ENCODE measurements at regions of chr2 and their contacts with region 1.

Region 1: GRCh38 chr2:232697100-232697865 is at the start of gene GIGYF2:
- DNase-seq: peak; percentile 73 to 94 (median 84)
- ATAC-seq: peak; percentile 95
- H3K4me3 ChIP-seq: peak within 1 kb of the TSS; percentile 94
- H3K4me3 Mint-ChIP-seq: peak within 1 kb of the TSS; percentile 88 to 98 (median 93)
- H3K27ac ChIP-seq: peak within 1 kb of the TSS; percentile 96
- H3K27ac Mint-ChIP-seq: peak within 1 kb of the TSS; percentile 82 to 96 (median 87)
- H3K4me1 ChIP-seq: peaks cover 35 to 37% of the 10 kb centered on the region in 2 donors
- H3K4me1 Mint-ChIP-seq: peaks cover 22 to 40% (median 35%) of the 10 kb centered on the region in 7 donors
- H3K27me3 ChIP-seq: no peaks in the 10 kb centered on the region
- H3K27me3 Mint-ChIP-seq: peaks cover 0 to 10% (median 0%) of the 10 kb centered on the region in 5 donors
- total RNA-seq, gene GIGYF2: 70.7 to 82.8 (median 79.8) TPM

Region 2: DNA sequence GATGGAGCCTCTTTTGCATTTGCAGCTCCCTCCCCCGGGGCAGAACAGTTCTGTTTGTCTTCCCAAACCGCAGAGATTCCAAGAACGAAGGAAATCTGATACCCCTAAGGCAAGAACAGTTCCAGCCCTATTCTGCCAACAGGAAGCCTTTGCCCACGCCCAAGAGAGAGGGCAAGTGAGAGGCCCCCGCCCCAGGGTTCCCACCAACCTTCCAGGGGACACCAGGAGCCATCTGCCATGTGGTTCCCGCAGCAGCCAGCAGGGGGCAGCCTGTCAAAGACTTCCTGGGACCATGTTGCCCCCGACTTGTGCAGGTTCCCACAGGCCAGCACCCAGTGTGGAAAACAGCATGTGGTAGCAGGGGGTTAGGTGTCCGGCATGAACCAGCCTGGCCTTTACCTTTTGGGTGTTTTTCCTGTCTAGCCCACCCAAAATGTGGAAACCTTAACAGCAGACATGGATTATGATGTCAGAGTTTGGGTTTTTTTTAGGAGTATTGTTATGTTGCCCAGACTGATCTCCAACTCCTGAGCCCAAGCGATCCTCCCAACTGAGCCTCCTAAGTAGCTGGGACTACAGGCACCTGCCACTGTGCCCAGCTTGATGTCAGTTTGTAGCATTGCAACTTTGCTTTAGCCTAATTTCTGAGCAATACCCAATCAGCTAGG is 85.6 kb before region 1 on chr2:
- CTCF ChIA-PET with region 1: no interaction called
- POLR2A ChIA-PET with region 1: no interaction called
- intact Hi-C with region 1: loop called (anchors 1 to 5 kb)
- DNase-seq: peak; percentile 18 to 72 (median 48)
- ATAC-seq: peak; percentile 72
- H3K4me3 ChIP-seq: no peak overlapping the region
- H3K4me3 Mint-ChIP-seq: no peak overlapping the region
- H3K27ac ChIP-seq: no peak overlapping the region
- H3K27ac Mint-ChIP-seq: no peak overlapping the region
- H3K4me1 ChIP-seq: no peaks in the 10 kb centered on the region
- H3K4me1 Mint-ChIP-seq: no peaks in the 10 kb centered on the region
- H3K27me3 ChIP-seq: no peaks in the 10 kb centered on the region
- H3K27me3 Mint-ChIP-seq: no peaks in the 10 kb centered on the region

Region 3: DNA sequence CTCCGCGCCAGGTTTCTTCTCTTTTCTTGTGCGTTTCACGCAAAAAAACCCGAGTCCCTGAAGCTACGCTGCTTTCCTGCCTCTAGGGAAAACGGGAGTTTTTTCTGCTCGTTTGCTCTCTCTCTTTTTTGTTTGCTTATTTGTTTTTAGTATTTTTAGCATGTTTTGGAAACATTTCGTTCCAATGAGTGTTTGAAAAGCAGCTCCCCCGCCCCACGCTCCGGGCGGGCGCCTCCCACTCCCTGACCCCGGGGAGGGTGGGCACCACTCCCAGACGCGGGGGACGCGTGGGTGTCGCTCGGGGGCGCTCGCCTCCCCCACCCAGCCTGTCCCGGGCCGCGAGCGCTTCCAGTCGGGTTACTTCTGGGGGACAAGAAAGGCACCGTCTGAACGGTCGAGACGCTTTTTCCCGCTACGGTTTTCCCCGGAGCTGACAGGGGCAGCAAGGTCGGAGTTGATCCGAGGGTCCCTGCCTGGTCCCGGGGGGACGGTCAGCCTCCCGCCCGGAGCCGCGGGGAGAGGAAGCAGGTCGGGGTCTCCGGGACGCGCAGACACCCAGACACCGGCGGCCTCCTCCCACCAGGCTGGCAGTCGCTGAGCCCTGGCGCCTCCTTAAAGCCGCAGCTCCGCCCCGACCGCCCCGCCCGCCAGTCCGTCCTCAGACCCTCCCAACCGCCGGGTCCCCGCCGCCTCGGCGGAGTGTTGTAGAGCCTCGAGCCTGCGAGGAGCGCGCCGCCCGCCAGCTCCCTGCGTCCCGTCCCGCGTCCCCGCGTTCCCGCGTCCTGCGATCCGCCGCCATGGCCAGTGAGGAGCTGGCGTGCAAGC is 64.2 kb before region 1 on chr2 and contains the start of gene EFHD1:
- CTCF ChIA-PET with region 1: interaction called, 3 read pairs
- POLR2A ChIA-PET with region 1: interaction called, 4 read pairs
- intact Hi-C with region 1: loop called in 1 of 2 experiments (anchors 2 kb)
- DNase-seq: peak; percentile 17 to 64 (median 22)
- ATAC-seq: peak; percentile 79
- H3K4me3 ChIP-seq: peak within 1 kb of the TSS; percentile 47
- H3K4me3 Mint-ChIP-seq: peak within 1 kb of the TSS; percentile 44 to 79 (median 62)
- H3K27ac ChIP-seq: no peak within 1 kb of the TSS
- H3K27ac Mint-ChIP-seq: peak within 1 kb of the TSS in 1 of 9 donors; percentile 32
- H3K4me1 ChIP-seq: peaks cover 5 to 7% of the 10 kb centered on the region in 2 donors
- H3K4me1 Mint-ChIP-seq: peaks cover 2 to 20% (median 9%) of the 10 kb centered on the region in 7 donors
- H3K27me3 ChIP-seq: peaks cover 4 to 8% of the 10 kb centered on the region in 2 donors
- H3K27me3 Mint-ChIP-seq: peaks cover 30 to 58% (median 49%) of the 10 kb centered on the region in 5 donors
- total RNA-seq, gene EFHD1: 0.70 to 2.9 (median 2.1) TPM

Region 4: DNA sequence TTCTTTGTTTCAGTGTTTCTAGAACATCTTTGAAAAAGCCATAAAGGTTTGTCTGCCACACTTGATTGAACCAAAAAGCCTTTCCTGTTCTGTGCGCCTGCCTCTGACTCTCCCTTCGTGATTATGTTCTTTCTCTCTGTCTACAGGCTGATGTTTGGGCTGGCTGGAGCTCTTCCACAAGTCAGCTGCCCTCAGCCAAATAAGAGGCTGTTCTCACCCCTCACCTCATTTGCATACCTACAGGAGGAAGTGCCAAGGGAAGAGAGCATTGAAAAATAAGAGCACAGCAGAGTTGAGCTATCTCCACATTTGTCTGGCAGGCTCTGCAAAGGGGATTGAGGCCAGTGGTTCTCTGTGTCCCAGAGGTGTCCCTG is 378.7 kb after region 1 on chr2:
- CTCF ChIA-PET with region 1: no interaction called
- POLR2A ChIA-PET with region 1: no interaction called
- intact Hi-C with region 1: loop called (anchors 5 to 10 kb)
- DNase-seq: peak in 8 of 9 donors; percentile 25 to 74 (median 61)
- ATAC-seq: peak; percentile 80
- H3K4me3 ChIP-seq: peak overlapping the region; percentile 49
- H3K4me3 Mint-ChIP-seq: no peak overlapping the region
- H3K27ac ChIP-seq: peak overlapping the region; percentile 57
- H3K27ac Mint-ChIP-seq: no peak overlapping the region
- H3K4me1 ChIP-seq: peaks cover 78 to 83% of the 10 kb centered on the region in 2 donors
- H3K4me1 Mint-ChIP-seq: peaks cover 29 to 39% (median 35%) of the 10 kb centered on the region in 7 donors
- H3K27me3 ChIP-seq: no peaks in the 10 kb centered on the region
- H3K27me3 Mint-ChIP-seq: no peaks in the 10 kb centered on the region

Measured in naive thymus-derived CD4-positive, alpha-beta T cell (primary cell).